Activated CD4-positive, alpha-beta T cell treated with anti-CD3 and anti-CD28 coated beads for 36 hours (primary cell): ENCODE measurements at regions of chr14 and their contacts with region 1.

Region 1: GRCh38 chr14:92680781-92681650 is 67.4 kb downstream of the LGMN start:
- DNase-seq: peak; percentile 87
- ATAC-seq: peak; percentile 37
- H3K4me3 Mint-ChIP-seq: no peak overlapping the region
- H3K27ac Mint-ChIP-seq: peak overlapping the region; percentile 33
- H3K4me1 Mint-ChIP-seq: peaks cover 28% of the 10 kb centered on the region
- H3K27me3 Mint-ChIP-seq: no peaks in the 10 kb centered on the region

Region 2: DNA sequence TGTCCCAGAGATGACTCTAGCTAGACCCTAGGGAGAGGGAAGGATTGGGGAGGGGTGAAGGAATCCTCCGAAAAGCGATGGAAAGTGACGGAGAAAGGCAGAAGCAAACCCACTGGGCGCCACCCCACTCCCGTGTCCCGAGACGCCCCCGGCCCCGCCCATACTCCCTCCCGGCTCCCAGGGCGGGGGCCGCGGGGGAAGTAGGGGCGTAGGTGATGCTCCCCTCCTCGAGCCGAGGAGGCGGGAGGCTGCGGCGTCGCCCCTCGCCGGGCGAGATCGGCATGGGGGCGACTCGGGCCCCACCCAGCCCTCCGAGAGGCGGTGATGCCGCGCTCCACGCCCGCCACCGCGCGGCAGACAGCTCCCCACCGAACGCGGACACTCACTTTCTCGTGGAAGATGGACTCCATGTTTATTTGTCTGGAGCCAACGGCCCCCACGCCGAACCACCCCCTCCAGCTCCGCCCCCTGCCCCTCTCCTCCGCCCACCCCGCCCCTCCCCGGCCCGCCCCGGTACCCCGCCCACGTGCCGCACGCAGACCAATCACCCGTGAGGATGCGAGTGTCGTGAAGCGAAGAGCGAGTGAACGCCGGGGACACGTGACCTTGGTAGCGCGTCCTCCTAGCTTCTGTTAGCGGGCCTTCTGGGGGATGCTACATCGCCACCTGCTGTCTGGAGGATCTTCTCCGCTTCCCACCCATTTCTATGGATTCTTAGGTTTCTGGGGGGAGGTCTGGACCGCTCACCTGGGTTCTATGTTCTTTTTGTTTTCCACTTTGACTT is 574.7 kb before region 1 on chr14 and contains the start of gene ATXN3:
- CTCF ChIA-PET with region 1: no interaction called
- POLR2A ChIA-PET with region 1: no interaction called
- intact Hi-C with region 1: loop called in 1 of 2 experiments (anchors 5 kb)
- DNase-seq: peak; percentile 98
- ATAC-seq: peak; percentile 97
- H3K4me3 Mint-ChIP-seq: peak within 1 kb of the TSS; percentile 90
- H3K27ac Mint-ChIP-seq: peak within 1 kb of the TSS; percentile 92
- H3K4me1 Mint-ChIP-seq: peaks cover 42% of the 10 kb centered on the region
- H3K27me3 Mint-ChIP-seq: no peaks in the 10 kb centered on the region
- total RNA-seq, gene ATXN3: 32.7 to 36.0 TPM

Region 3: GRCh38 chr14:92340931-92341330 is 340.1 kb before region 1 on chr14:
- CTCF ChIA-PET with region 1: interaction called, 3 read pairs
- POLR2A ChIA-PET with region 1: no interaction called
- intact Hi-C with region 1: loop called (anchors 5 kb)
- DNase-seq: peak; percentile 71
- ATAC-seq: peak; percentile 66
- H3K4me3 Mint-ChIP-seq: no peak overlapping the region
- H3K27ac Mint-ChIP-seq: peak overlapping the region; percentile 40
- H3K4me1 Mint-ChIP-seq: peaks cover 30% of the 10 kb centered on the region
- H3K27me3 Mint-ChIP-seq: peaks cover 34% of the 10 kb centered on the region

Region 4: DNA sequence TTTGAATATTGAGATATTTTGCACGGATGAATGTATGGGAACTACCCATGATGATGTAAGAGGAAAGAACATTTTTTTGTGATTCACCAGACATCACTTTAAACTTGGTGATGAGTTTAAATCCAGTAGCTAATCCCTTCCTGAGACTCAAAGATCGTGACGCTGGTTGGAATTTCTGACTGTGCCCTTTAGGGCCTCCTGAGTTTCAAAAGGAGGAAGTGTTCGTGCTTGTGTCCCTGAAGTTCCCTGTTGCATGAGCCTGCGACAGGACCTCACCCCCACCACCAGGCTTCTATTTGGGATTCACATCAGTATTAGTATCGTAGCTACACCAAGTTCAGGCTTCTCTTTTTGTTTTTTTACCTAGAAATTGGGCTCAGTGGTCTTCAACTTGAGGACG is 186.0 kb before region 1 on chr14:
- CTCF ChIA-PET with region 1: no interaction called
- POLR2A ChIA-PET with region 1: no interaction called
- intact Hi-C with region 1: no loop called
- DNase-seq: no peak
- ATAC-seq: no peak
- H3K4me3 Mint-ChIP-seq: no peak overlapping the region
- H3K27ac Mint-ChIP-seq: no peak overlapping the region
- H3K4me1 Mint-ChIP-seq: no peaks in the 10 kb centered on the region
- H3K27me3 Mint-ChIP-seq: no peaks in the 10 kb centered on the region

Region 5: DNA sequence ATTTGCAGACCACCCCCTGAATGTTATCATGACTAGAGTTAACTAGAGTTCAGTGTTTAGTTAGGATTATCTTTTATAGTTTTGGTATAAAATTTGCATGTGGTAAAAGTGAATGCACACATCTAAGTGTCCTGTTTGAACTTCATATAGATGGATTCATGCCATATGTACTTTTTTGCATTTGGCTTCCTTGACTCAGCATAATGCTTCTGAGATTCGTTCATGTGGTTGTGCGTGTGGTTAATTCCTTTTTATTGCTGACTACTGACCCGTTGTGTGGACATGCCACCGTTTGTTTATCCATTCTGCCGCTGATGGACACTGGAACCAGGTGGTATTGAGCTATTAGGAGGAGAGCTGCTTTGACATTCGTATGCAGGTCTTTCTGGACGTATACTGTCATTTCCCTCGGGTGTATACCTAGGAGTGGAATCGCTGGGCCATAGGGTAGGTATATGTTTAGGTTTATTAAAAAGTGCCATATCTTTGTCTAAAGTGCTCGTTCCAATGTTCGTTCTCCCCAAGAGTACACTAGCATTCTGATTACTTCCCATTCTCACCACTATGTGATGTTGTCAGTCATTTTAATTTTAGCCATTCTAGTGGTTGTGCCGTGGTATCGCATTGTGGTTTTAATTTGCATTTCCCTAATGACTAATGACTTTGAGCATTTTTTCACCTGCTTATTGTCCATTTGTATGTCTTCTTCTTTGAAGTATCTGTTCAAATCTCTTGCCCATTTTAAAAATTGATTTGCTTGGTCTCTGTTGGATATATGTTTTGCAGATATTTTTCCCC is 129.8 kb before region 1 on chr14:
- CTCF ChIA-PET with region 1: interaction called, 6 read pairs
- POLR2A ChIA-PET with region 1: no interaction called
- intact Hi-C with region 1: loop called (anchors 1 to 5 kb)
- DNase-seq: no peak
- ATAC-seq: no peak
- H3K4me3 Mint-ChIP-seq: no peak overlapping the region
- H3K27ac Mint-ChIP-seq: no peak overlapping the region
- H3K4me1 Mint-ChIP-seq: peaks cover 35% of the 10 kb centered on the region
- H3K27me3 Mint-ChIP-seq: no peaks in the 10 kb centered on the region

Region 6: DNA sequence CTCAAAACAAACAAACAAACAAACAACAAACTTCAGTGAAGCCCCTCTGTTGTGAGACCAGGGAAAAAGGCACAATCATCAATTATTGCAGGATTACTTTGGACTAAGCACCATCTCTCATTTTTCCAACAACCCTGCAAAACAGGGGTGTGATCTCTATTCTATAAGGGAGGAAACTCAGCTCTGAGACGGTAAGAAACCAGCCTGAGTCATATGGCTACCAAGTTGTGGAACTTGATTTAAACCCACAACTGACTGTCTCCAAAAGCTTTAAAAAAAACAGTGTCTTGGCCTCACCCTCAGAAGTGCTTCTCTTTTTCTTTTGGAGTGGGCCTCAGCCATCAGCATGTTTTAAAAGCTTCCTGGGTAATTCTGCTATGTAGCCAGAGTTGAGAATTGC is 117.7 kb before region 1 on chr14:
- CTCF ChIA-PET with region 1: interaction called, 6 read pairs
- POLR2A ChIA-PET with region 1: no interaction called
- intact Hi-C with region 1: loop called (anchors 2 to 5 kb)
- DNase-seq: peak; percentile 41
- ATAC-seq: peak; percentile 87
- H3K4me3 Mint-ChIP-seq: no peak overlapping the region
- H3K27ac Mint-ChIP-seq: no peak overlapping the region
- H3K4me1 Mint-ChIP-seq: peaks cover 34% of the 10 kb centered on the region
- H3K27me3 Mint-ChIP-seq: no peaks in the 10 kb centered on the region

Region 7: DNA sequence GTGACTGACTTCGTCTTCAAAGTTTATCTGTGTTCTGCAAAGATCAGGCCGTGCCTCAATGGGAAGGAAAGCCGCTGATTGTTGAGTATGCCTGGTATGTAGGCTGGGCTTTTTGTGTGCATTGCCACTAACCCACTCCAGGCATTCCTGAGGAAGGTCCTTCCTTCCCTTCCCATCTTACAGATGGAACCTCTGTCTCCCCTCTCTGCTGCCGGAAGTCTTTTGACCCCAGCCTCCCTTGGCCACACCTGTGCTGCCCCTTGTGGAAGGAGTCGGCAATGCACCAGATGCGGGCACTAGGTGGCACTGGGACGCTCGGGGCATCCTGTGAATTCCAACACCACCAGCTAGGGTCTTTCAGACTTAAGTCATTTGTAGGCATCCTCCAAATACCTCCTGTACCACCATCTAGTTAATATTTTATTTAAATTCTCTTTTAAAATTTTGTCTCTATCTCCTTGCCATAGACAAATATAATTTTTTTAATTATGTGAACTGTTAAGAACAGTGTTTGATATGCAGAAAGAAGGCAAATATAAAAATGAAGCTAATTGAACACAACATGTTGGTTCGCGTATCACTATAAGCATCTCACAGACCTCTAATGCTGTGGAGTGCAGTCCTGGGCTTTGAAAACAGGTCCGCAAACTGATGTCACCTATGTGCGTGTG is 67.9 kb before region 1 on chr14:
- CTCF ChIA-PET with region 1: interaction called, 19 read pairs
- POLR2A ChIA-PET with region 1: no interaction called
- intact Hi-C with region 1: loop called (anchors 1 kb)
- DNase-seq: peak; percentile 82
- ATAC-seq: peak; percentile 60
- H3K4me3 Mint-ChIP-seq: no peak overlapping the region
- H3K27ac Mint-ChIP-seq: no peak overlapping the region
- H3K4me1 Mint-ChIP-seq: peaks cover 47% of the 10 kb centered on the region
- H3K27me3 Mint-ChIP-seq: no peaks in the 10 kb centered on the region

Region 8: DNA sequence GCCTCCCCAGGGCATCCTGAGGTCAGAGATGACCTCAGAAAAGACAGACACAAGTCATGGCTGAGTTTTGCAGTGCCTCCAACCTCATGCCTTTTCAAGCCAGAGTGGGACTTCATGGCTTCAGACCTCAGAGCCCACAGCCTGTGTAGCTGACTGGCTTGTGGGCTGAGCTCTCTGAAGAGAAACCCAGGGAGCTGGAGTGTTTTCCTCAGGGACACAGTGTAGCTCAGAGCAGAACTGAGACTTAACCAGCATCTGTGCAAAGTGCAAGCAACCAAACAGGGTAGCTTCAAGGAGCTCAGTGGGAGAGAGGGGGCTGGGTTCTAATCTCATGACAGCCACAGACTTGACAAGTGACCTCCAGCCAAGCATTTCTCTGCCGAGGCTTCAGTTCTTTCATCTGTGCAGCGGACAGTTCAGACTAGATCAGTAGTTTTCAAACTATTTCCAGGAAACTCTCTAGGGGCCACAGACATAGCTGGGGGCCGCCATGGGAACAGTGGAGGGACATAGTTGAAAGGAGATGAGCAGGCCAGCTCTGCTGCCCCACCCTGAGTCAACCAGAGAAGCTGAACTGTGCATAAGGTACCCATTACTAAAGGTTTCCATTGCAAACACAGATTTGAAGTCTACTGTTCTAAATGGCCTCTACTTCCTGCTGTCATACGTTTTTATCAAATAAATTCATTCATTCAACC is 12.6 kb before region 1 on chr14:
- CTCF ChIA-PET with region 1: interaction called, 4 read pairs
- POLR2A ChIA-PET with region 1: interaction called, 7 read pairs
- intact Hi-C with region 1: loop called in 1 of 2 experiments (anchors 1 kb)
- DNase-seq: peak; percentile 64
- ATAC-seq: peak; percentile 82
- H3K4me3 Mint-ChIP-seq: no peak overlapping the region
- H3K27ac Mint-ChIP-seq: peak overlapping the region; percentile 78
- H3K4me1 Mint-ChIP-seq: peaks cover 77% of the 10 kb centered on the region
- H3K27me3 Mint-ChIP-seq: no peaks in the 10 kb centered on the region